ENCODE measurements at regions of chr15 and their contacts with region 1.

Region 1: GRCh38 chr15:44728576-44729407 is 7.5 kb upstream of the TRIM69 start:
- DNase-seq: peak; percentile 90 to 92
- H3K4me3 ChIP-seq: peak overlapping the region; percentile 88
- H3K27ac ChIP-seq: peak overlapping the region; percentile 91
- H3K4me1 ChIP-seq: peaks cover 35% of the 10 kb centered on the region
- H3K27me3 ChIP-seq: no peaks in the 10 kb centered on the region
- CTCF ChIP-seq: no peak

Region 2: DNA sequence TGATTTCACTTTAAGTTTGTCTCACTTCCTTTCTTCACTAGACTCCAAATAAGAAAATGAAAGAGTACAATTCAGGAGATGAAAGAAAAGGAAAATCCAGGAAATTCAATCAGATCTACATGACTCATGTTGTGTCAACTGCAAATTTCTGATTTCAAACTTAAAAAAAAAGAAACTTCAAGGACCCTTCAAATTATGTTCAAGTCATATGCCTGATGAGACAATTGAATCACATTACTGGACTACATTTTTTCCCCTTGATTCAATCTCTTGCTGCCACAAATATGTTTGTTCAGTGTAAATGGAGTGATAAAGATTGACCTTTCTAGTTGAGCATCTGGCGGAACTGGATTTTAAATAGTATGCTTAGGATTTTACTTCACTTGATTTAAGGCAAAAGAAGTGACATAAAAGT is 571.1 kb before region 1 on chr15:
- CTCF ChIA-PET with region 1: no interaction called
- POLR2A ChIA-PET with region 1: no interaction called
- intact Hi-C with region 1: loop called (anchors 5 kb)
- DNase-seq: peak; percentile 4 to 95
- H3K4me3 ChIP-seq: peak overlapping the region; percentile 27; the same call in 1 of the 2 replicates
- H3K27ac ChIP-seq: peak overlapping the region; percentile 82
- H3K4me1 ChIP-seq: peaks cover 39% of the 10 kb centered on the region
- H3K27me3 ChIP-seq: no peaks in the 10 kb centered on the region
- CTCF ChIP-seq: no peak

Region 3: DNA sequence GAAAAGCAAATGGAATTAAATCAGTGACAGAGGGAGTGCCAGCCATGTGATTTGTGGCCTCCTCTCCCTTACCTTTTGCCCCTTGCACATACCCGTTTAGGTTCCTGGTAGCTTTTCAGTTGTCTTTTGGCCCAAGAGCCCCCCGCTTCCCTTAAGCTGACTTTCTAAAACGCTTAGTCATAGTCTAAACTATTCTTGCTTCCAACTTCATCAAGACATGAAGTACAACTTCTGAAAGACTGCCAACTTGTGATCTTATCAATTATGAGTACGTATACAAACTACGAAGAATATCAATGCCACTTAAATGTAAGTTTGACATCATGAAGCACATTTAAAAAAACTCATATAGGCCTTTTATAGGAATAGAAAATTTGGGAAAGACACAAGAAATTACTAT is 129.9 kb before region 1 on chr15:
- CTCF ChIA-PET with region 1: no interaction called
- POLR2A ChIA-PET with region 1: no interaction called
- intact Hi-C with region 1: loop called (anchors 5 kb)
- DNase-seq: peak in 1 of 2 experiments; percentile 32
- H3K4me3 ChIP-seq: no peak overlapping the region
- H3K27ac ChIP-seq: no peak overlapping the region
- H3K4me1 ChIP-seq: no peaks in the 10 kb centered on the region
- H3K27me3 ChIP-seq: no peaks in the 10 kb centered on the region
- CTCF ChIP-seq: no peak

Region 4: GRCh38 chr15:44620081-44620480 is 108.7 kb before region 1 on chr15:
- CTCF ChIA-PET with region 1: no interaction called
- POLR2A ChIA-PET with region 1: no interaction called
- intact Hi-C with region 1: no loop called
- DNase-seq: no peak
- H3K4me3 ChIP-seq: no peak overlapping the region
- H3K27ac ChIP-seq: no peak overlapping the region
- H3K4me1 ChIP-seq: no peaks in the 10 kb centered on the region
- H3K27me3 ChIP-seq: no peaks in the 10 kb centered on the region
- CTCF ChIP-seq: no peak

Region 5: GRCh38 chr15:44663409-44664308 is 65.1 kb before region 1 on chr15 and contains the start of gene SPG11:
- CTCF ChIA-PET with region 1: interaction called, 5 read pairs
- POLR2A ChIA-PET with region 1: interaction called, 3 read pairs
- intact Hi-C with region 1: loop called (anchors 1 kb)
- DNase-seq: peak; percentile 87 to 96
- H3K4me3 ChIP-seq: peak within 1 kb of the TSS; percentile 75
- H3K27ac ChIP-seq: peak within 1 kb of the TSS; percentile 78
- H3K4me1 ChIP-seq: peaks cover 13% of the 10 kb centered on the region
- H3K27me3 ChIP-seq: no peaks in the 10 kb centered on the region
- CTCF ChIP-seq: peak; percentile 80
- total RNA-seq, gene SPG11: 63.2 and 64.2 TPM in 2 replicates

Region 6: GRCh38 chr15:44698641-44699040 is 30.2 kb before region 1 on chr15:
- CTCF ChIA-PET with region 1: no interaction called
- POLR2A ChIA-PET with region 1: no interaction called
- intact Hi-C with region 1: no loop called
- DNase-seq: no peak
- H3K4me3 ChIP-seq: no peak overlapping the region
- H3K27ac ChIP-seq: no peak overlapping the region
- H3K4me1 ChIP-seq: no peaks in the 10 kb centered on the region
- H3K27me3 ChIP-seq: no peaks in the 10 kb centered on the region
- CTCF ChIP-seq: no peak

Region 7: GRCh38 chr15:44711356-44712107 is 17.3 kb before region 1 on chr15 and contains the start of gene B2M:
- CTCF ChIA-PET with region 1: interaction called, 4 read pairs
- POLR2A ChIA-PET with region 1: interaction called, 8 read pairs
- intact Hi-C with region 1: loop called (anchors 1 kb)
- DNase-seq: peak; percentile 88 to 95
- H3K4me3 ChIP-seq: peak within 1 kb of the TSS; percentile 94
- H3K27ac ChIP-seq: peak within 1 kb of the TSS; percentile 53
- H3K4me1 ChIP-seq: peaks cover 18% of the 10 kb centered on the region
- H3K27me3 ChIP-seq: no peaks in the 10 kb centered on the region
- CTCF ChIP-seq: no peak
- total RNA-seq, gene B2M: 606 and 685 TPM in 2 replicates

Region 8: GRCh38 chr15:44798826-44799225 is 70.0 kb after region 1 on chr15:
- CTCF ChIA-PET with region 1: no interaction called
- POLR2A ChIA-PET with region 1: no interaction called
- intact Hi-C with region 1: no loop called
- DNase-seq: no peak
- H3K4me3 ChIP-seq: no peak overlapping the region
- H3K27ac ChIP-seq: no peak overlapping the region
- H3K4me1 ChIP-seq: no peaks in the 10 kb centered on the region
- H3K27me3 ChIP-seq: no peaks in the 10 kb centered on the region
- CTCF ChIP-seq: 0 out of 2 replicates have a peak, but pooled peaks have one; percentile 23

Region 9: DNA sequence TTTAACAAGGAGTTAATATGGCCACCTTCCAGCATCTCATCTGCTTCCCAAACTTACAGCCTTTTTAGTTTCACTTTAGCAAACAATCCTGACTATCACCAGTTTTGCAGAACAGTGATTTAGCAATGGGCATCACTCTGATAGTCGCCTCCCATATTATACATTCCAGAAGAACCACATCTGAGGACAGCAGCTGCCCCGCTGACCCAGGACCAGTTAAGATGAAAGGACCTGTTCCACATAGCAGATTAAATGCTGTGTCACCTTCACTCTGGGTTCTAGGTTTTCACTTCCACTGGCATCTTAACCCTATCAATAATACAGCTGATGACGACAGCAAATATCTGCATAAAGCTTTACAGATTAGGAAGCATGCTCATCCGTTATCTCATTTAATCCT is 107.3 kb after region 1 on chr15:
- CTCF ChIA-PET with region 1: no interaction called
- POLR2A ChIA-PET with region 1: interaction called, 13 read pairs
- intact Hi-C with region 1: no loop called
- DNase-seq: peak; percentile 62 to 67
- H3K4me3 ChIP-seq: no peak overlapping the region
- H3K27ac ChIP-seq: 0 out of 2 replicates have a peak overlapping the region, but pooled peaks have one; percentile 16
- H3K4me1 ChIP-seq: peaks cover 3% of the 10 kb centered on the region; the same call in 1 of the 2 replicates
- H3K27me3 ChIP-seq: no peaks in the 10 kb centered on the region
- CTCF ChIP-seq: no peak

Region 10: DNA sequence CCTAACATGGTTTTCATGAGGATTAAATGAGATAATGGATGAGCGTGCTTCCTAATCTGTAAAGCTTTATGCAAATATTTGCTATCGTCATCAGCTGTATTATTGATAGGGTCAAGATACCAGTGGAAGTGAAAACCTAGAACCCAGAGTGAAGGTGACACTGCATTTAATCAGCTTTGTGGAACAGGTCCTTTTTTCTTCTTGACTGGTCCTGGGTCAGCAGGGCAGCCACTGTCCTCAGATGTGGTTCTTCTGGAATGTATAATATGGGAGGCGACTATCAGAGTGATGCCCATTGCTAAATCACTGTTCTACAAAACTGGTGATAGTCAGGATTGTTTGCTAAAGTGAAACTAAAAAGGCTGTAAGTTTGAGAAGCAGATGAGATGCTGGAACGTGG is 335.6 kb after region 1 on chr15:
- CTCF ChIA-PET with region 1: interaction called, 20 read pairs
- POLR2A ChIA-PET with region 1: no interaction called
- intact Hi-C with region 1: no loop called
- DNase-seq: peak; percentile 64 to 77
- H3K4me3 ChIP-seq: no peak overlapping the region
- H3K27ac ChIP-seq: peak overlapping the region; percentile 47; the same call in 1 of the 2 replicates
- H3K4me1 ChIP-seq: peaks cover 3% of the 10 kb centered on the region; the same call in 1 of the 2 replicates
- H3K27me3 ChIP-seq: no peaks in the 10 kb centered on the region
- CTCF ChIP-seq: no peak